PC-3 (cell line): ENCODE measurements at regions of chr11 and their contacts with region 1.

Region 1: DNA sequence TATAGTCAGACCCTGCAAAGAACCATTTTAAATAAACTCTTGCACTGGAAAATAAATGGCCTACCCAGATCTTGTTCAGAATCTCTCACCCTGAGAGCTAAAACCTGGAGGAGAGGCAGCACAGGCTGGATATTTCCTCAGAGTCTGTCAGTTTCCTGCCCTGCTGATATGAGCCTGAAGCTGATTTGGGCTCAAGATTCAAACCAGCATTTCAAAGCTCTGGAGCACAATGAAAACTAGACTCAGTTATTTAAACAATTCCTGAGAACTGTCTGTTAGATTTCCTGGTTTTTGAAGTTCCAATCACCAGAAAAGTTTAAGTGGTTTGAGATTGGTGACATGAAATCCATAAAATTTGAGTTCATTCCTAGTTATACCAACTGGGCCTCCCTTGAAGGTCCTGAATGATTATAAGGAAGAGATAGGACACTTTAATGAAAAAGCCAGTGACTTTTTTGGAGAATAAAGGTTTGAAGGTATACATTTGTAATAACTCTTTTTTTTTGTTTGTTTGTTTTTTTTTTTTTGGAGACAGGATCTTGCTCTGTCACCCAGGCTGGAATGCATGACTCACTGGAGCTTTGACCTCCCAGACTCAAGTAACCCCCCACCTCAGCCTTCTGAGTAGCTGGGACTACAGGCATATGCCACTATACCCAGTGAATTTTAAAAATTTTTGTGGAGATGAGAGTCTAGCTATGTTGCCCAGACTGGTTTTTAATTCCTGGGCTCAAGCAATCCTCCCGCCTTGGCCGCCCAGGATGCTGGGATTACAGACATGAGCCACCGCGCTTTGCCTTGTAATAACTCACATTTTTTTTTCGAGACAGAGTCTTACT is 7.9 kb upstream of the ESAM start:
- DNase-seq: peak; percentile 90
- ATAC-seq: peak; percentile 90
- H3K4me3 ChIP-seq: no peak overlapping the region
- H3K27ac ChIP-seq: peak overlapping the region; percentile 59
- H3K4me1 ChIP-seq: peaks cover 32% of the 10 kb centered on the region
- H3K27me3 ChIP-seq: no peaks in the 10 kb centered on the region
- CTCF ChIP-seq: no peak

Region 2: GRCh38 chr11:124454552-124454951 is 315.5 kb before region 1 on chr11:
- CTCF ChIA-PET with region 1: no interaction called
- POLR2A ChIA-PET with region 1: no interaction called
- intact Hi-C with region 1: no loop called
- DNase-seq: no peak
- ATAC-seq: no peak
- H3K4me3 ChIP-seq: no peak overlapping the region
- H3K27ac ChIP-seq: no peak overlapping the region
- H3K4me1 ChIP-seq: no peaks in the 10 kb centered on the region
- H3K27me3 ChIP-seq: peaks cover 62% of the 10 kb centered on the region
- CTCF ChIP-seq: no peak

Region 3: GRCh38 chr11:124551189-124551588 is 218.8 kb before region 1 on chr11:
- CTCF ChIA-PET with region 1: no interaction called
- POLR2A ChIA-PET with region 1: no interaction called
- intact Hi-C with region 1: no loop called
- DNase-seq: no peak
- ATAC-seq: no peak
- H3K4me3 ChIP-seq: no peak overlapping the region
- H3K27ac ChIP-seq: no peak overlapping the region
- H3K4me1 ChIP-seq: no peaks in the 10 kb centered on the region
- H3K27me3 ChIP-seq: peaks cover 54% of the 10 kb centered on the region
- CTCF ChIP-seq: no peak; the same call in 1 of the 2 replicates

Region 4: DNA sequence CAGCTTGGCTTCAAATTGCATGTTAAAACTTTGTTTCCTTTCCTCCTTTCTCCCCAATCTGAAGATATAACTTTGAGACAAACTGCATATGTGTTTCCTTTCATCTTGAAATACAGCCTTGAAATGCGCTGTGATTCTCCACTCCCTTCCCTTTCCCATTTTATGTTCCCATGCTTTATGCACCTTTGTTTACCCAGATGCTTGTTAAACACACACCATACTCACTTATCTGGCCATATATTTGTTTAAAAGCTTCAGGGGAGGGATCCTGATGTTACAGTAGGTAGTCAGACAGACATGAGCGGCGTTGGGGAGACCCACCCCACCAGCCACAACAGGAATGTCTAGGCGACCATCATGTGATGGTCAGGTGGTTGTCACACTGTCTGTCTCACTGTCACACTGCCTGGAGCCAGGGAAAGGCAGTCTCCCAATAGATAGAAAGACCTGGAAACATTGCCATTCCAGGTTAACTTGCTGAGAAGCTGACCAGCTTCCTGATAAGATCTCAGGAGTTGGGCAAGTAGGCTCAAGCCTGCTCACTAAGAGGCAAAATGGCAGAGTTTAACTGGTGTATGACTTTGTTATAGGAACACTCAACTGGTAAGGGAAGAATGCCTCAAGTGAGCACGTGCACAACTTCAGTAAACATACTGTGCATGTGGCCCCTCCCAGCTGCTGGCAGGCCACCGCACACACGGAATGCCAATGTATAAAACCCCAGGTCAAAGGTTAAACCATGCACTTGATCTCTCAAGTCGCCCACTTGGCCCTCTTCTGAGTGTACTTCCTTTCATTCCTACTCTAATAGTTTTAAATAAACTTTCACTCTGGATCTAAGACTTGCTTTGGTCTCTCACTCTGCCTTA is 53.7 kb after region 1 on chr11:
- CTCF ChIA-PET with region 1: no interaction called
- POLR2A ChIA-PET with region 1: interaction called, 32 read pairs
- intact Hi-C with region 1: no loop called
- DNase-seq: peak; percentile 16
- ATAC-seq: peak; percentile 80
- H3K4me3 ChIP-seq: no peak overlapping the region
- H3K27ac ChIP-seq: no peak overlapping the region
- H3K4me1 ChIP-seq: peaks cover 10% of the 10 kb centered on the region; the same call in 1 of the 2 replicates
- H3K27me3 ChIP-seq: no peaks in the 10 kb centered on the region
- CTCF ChIP-seq: no peak